Transverse colon (tissue), 4 donors: ENCODE measurements at regions of chr11 and their contacts with region 1.

Region 1: DNA sequence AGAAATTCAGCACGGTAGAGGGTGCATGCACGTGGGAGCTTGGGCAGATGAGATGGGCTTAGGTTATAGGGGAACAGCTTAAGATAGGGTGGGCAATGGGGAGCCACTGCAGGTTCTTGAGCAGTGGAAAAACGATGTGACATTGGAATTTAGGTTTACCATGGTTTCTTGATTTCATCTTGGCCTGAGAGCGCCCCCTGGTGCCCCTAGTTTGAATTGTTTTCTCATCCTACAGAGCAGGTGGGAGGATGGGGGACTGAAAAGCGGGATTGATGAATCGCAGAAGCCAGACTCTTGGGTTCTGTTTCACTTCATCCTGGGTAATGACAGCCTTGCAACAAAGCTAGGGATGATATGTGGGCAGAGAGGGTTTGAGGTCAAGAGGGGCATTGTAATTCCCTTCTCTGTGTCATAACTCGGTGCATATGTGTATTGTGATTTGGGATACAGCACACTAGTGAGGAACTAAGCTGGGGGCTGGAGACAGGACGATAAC is 6.7 kb upstream of the MCAM start:
- DNase-seq: peak; percentile 84
- H3K4me3 ChIP-seq: no peak overlapping the region
- H3K27ac ChIP-seq: peak overlapping the region in 2 of 4 donors; percentile 88 to 97
- H3K4me1 ChIP-seq: peaks cover 14 to 36% (median 31%) of the 10 kb centered on the region in 4 donors
- H3K27me3 ChIP-seq: peaks cover 25% of the 10 kb centered on the region
- CTCF ChIP-seq: peak; percentile 78 to 85 (median 84)
- EP300 ChIP-seq: peak; percentile 64
- POLR2A ChIP-seq: no peak

Region 2: GRCh38 chr11:119205574-119206510 is 117.7 kb before region 1 on chr11 and contains the start of gene CBL:
- in situ Hi-C with region 1: no loop called
- intact Hi-C with region 1: loop called (anchors 5 kb)
- DNase-seq: peak; percentile 99
- H3K4me3 ChIP-seq: peak within 1 kb of the TSS; percentile 61 to 86 (median 82)
- H3K27ac ChIP-seq: peak within 1 kb of the TSS; percentile 92 to 96 (median 94)
- H3K4me1 ChIP-seq: peaks cover 2 to 26% (median 11%) of the 10 kb centered on the region in 4 donors
- H3K27me3 ChIP-seq: no peaks in the 10 kb centered on the region
- CTCF ChIP-seq: peak; percentile 91 to 97 (median 94)
- EP300 ChIP-seq: no peak
- POLR2A ChIP-seq: peak; percentile 63
- total RNA-seq, gene CBL: 6.8 to 18.7 (median 12.4) TPM

Region 3: DNA sequence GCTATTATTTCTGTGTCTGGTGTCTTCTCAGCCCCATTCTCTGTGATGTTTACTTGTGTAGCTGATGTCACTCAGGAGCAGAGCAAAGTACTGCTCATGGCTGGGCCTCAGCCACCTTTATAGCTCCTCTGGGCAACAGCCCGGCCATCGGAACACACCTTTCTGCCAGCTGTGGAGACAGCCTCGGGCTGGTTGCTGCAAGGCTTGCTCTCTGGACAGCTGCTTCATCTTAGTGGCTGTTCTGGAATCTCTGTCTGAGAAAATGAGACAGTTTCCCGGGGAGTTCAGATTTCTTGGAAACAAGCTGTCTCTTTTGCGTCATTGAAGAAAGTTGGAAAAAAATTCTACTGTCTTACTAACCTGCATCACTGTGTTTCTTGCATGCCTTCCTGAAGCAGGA is 79.4 kb after region 1 on chr11:
- in situ Hi-C with region 1: no loop called
- intact Hi-C with region 1: no loop called
- DNase-seq: no peak
- H3K4me3 ChIP-seq: no peak overlapping the region
- H3K27ac ChIP-seq: no peak overlapping the region
- H3K4me1 ChIP-seq: no peaks in the 10 kb centered on the region
- H3K27me3 ChIP-seq: peaks cover 6% of the 10 kb centered on the region
- CTCF ChIP-seq: no peak
- EP300 ChIP-seq: no peak
- POLR2A ChIP-seq: no peak